Activated CD8-positive, alpha-beta T cell treated with anti-CD3 and anti-CD28 coated beads for 36 hours (primary cell): ENCODE measurements at regions of chr1 and their contacts with region 1.

Region 1: GRCh38 chr1:100400404-100400803 is 48.1 kb downstream of the CDC14A start:
- DNase-seq: peak; percentile 76
- ATAC-seq: peak; percentile 68
- H3K4me3 Mint-ChIP-seq: peak overlapping the region; percentile 63
- H3K27ac Mint-ChIP-seq: peak overlapping the region; percentile 97
- H3K4me1 Mint-ChIP-seq: peaks cover 78% of the 10 kb centered on the region
- H3K27me3 Mint-ChIP-seq: no peaks in the 10 kb centered on the region
- CTCF ChIP-seq: no peak

Region 2: DNA sequence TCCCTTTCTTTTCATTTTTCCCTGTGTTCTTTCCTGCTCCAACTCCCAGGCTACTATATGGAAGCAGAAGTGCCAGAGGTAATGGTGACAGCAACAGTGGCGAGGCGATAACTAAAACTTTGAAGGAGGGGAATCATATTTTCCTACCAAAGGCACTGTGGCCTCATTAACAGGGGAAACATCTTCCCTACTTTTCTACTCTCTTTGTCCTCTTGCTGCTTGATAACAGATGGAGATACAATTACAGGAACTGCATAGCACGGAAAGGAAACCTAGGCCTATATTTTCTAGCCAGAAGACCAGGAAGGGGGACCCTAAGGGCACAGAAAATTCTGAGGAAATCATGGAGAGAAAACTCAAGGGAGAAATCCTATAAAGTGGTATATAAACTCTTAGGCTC is 309.9 kb before region 1 on chr1:
- CTCF ChIA-PET with region 1: no interaction called
- POLR2A ChIA-PET with region 1: no interaction called
- intact Hi-C with region 1: no loop called
- DNase-seq: no peak
- ATAC-seq: no peak
- H3K4me3 Mint-ChIP-seq: no peak overlapping the region
- H3K27ac Mint-ChIP-seq: no peak overlapping the region
- H3K4me1 Mint-ChIP-seq: peaks cover 4% of the 10 kb centered on the region
- H3K27me3 Mint-ChIP-seq: no peaks in the 10 kb centered on the region
- CTCF ChIP-seq: no peak

Region 3: GRCh38 chr1:100364697-100365096 is 35.7 kb before region 1 on chr1:
- CTCF ChIA-PET with region 1: interaction called, 6 read pairs
- POLR2A ChIA-PET with region 1: interaction called, 4 read pairs
- intact Hi-C with region 1: loop called (anchors 5 kb)
- DNase-seq: no peak
- ATAC-seq: no peak
- H3K4me3 Mint-ChIP-seq: peak overlapping the region; percentile 28
- H3K27ac Mint-ChIP-seq: peak overlapping the region; percentile 77
- H3K4me1 Mint-ChIP-seq: peaks cover 70% of the 10 kb centered on the region
- H3K27me3 Mint-ChIP-seq: no peaks in the 10 kb centered on the region
- CTCF ChIP-seq: no peak

Region 4: DNA sequence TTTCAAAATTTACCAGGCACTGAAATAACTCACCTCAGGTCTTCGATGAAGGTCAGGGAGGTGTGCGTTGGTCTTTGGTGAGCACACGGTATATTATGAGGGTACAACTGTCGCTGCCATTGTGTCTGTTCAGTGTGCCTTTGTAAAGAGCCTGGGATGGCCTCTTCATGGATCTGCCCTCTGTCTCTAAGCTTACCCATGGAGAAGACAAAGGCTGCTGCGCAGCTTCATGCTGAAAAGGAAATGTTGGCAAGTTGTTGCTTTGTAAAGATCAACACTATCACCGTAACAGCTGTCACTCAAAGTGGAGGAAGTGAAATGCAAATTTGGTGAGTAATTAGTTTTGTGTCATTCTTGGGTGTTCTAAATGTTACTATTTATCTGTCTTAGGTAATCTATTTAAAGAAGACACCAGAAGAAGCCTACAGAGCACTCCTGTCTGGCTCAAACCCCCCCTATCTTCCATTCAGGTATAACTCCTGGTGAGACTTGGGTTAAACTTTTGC is 23.5 kb after region 1 on chr1:
- CTCF ChIA-PET with region 1: interaction called, 13 read pairs
- POLR2A ChIA-PET with region 1: interaction called, 4 read pairs
- intact Hi-C with region 1: no loop called
- DNase-seq: peak; percentile 13
- ATAC-seq: peak; percentile 67
- H3K4me3 Mint-ChIP-seq: peak overlapping the region; percentile 51
- H3K27ac Mint-ChIP-seq: peak overlapping the region; percentile 86
- H3K4me1 Mint-ChIP-seq: peaks cover 61% of the 10 kb centered on the region
- H3K27me3 Mint-ChIP-seq: no peaks in the 10 kb centered on the region
- CTCF ChIP-seq: no peak

Region 5: GRCh38 chr1:100565533-100565932 is 165.1 kb after region 1 on chr1:
- CTCF ChIA-PET with region 1: no interaction called
- POLR2A ChIA-PET with region 1: no interaction called
- intact Hi-C with region 1: no loop called
- DNase-seq: no peak
- ATAC-seq: no peak
- H3K4me3 Mint-ChIP-seq: no peak overlapping the region
- H3K27ac Mint-ChIP-seq: no peak overlapping the region
- H3K4me1 Mint-ChIP-seq: no peaks in the 10 kb centered on the region
- H3K27me3 Mint-ChIP-seq: peaks cover under 1% of the 10 kb centered on the region
- CTCF ChIP-seq: no peak